ENCODE measurements at regions of chr5 and their contacts with region 1.

Region 1: GRCh38 chr5:122195784-122196394 is 66.5 kb downstream of the ZNF474 start:
- DNase-seq: peak; percentile 57
- H3K4me3 ChIP-seq: no peak overlapping the region
- H3K27ac ChIP-seq: no peak overlapping the region
- H3K4me1 ChIP-seq: no peaks in the 10 kb centered on the region
- H3K27me3 ChIP-seq: peaks cover 33% of the 10 kb centered on the region
- CTCF ChIP-seq: peak; percentile 66

Region 2: DNA sequence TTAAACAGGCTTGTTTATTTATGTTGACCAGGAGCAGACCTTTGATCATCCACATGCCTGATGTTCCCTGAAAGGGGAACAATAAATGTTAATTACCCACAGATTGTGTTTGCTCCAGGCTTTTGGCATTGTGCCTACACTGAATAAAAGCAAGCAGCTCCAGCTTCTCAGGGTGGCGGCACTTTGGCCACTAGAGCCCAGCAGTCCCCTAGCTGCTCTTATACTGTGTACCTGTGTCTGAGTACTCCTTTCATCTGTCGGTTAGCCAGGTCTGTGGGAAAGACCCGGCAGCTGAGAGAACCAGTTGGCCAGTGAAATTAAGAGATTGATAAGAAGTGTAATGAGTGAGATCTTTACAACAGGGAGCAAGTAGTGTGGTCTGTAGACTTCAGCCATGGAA is 599.0 kb before region 1 on chr5:
- CTCF ChIA-PET with region 1: no interaction called
- POLR2A ChIA-PET with region 1: no interaction called
- intact Hi-C with region 1: no loop called
- DNase-seq: no peak
- H3K4me3 ChIP-seq: no peak overlapping the region
- H3K27ac ChIP-seq: no peak overlapping the region
- H3K4me1 ChIP-seq: no peaks in the 10 kb centered on the region
- H3K27me3 ChIP-seq: no peaks in the 10 kb centered on the region
- CTCF ChIP-seq: no peak

Region 3: GRCh38 chr5:121744577-121744976 is 451.3 kb before region 1 on chr5:
- CTCF ChIA-PET with region 1: no interaction called
- POLR2A ChIA-PET with region 1: no interaction called
- intact Hi-C with region 1: no loop called
- DNase-seq: no peak
- H3K4me3 ChIP-seq: no peak overlapping the region
- H3K27ac ChIP-seq: no peak overlapping the region
- H3K4me1 ChIP-seq: no peaks in the 10 kb centered on the region
- H3K27me3 ChIP-seq: no peaks in the 10 kb centered on the region
- CTCF ChIP-seq: no peak

Region 4: DNA sequence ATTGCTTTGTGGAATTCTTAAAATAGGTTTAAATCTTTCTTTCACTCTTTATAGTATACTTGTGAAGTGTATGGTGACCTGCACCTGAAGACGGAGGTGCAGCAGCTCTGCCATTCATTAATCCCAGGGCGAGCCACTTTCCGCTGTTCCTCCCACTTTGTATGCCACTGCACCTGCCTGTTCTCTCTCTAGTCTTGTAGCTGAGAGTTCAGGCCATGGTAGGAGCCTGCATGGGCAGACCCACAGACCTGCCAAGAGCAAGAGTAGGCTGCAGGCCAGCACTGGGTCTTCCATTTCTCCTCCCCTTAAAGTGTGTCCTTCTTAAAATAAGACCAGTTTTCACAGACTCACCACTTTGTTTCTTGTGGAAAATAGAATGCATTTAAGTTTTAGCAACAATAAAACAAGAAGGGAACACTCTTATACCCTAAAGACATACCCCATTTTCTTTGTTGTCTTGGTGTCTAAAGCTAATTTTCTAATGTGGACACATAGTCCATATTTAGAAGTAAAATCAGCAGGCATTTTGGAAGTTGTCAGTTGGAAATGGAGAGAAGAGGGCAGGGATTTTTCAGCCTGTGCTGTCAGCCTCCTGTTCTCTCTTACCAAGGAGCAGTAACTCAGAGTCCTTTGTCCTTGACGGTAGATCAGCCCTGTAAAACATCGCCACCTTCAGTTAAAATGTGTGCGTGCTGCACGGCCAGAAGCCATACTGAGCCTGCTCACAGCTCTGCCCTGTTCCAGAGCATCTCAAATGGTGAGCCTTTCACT is 219.3 kb after region 1 on chr5:
- CTCF ChIA-PET with region 1: no interaction called
- POLR2A ChIA-PET with region 1: no interaction called
- intact Hi-C with region 1: loop called (anchors 2 kb)
- DNase-seq: peak; percentile 74
- H3K4me3 ChIP-seq: no peak overlapping the region
- H3K27ac ChIP-seq: no peak overlapping the region
- H3K4me1 ChIP-seq: no peaks in the 10 kb centered on the region
- H3K27me3 ChIP-seq: peaks cover 9% of the 10 kb centered on the region
- CTCF ChIP-seq: peak; percentile 77

Region 5: DNA sequence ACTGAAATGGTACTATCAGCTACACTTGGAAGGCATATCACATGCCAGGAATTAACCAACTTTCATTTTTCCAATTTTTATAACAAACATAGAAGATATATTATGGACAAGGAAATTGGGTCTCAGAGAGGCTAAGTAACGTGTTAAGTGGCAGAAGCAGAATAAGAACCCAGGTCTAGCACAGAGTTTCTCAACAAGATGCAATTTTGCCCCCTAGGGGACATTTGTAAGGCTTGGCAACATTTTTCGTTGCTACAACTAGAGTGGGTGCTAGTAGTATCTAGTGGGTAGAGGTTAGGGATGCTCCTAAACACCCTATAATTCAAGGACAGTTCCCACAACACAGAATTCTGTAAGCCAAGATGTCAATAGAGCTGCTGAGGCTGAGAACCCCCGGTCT is 296.8 kb after region 1 on chr5:
- CTCF ChIA-PET with region 1: no interaction called
- POLR2A ChIA-PET with region 1: no interaction called
- intact Hi-C with region 1: loop called (anchors 5 kb)
- DNase-seq: peak; percentile 30
- H3K4me3 ChIP-seq: no peak overlapping the region
- H3K27ac ChIP-seq: no peak overlapping the region
- H3K4me1 ChIP-seq: no peaks in the 10 kb centered on the region
- H3K27me3 ChIP-seq: no peaks in the 10 kb centered on the region
- CTCF ChIP-seq: peak; percentile 42